Transverse colon (tissue), 4 donors: ENCODE measurements at regions of chr15 and their contacts with region 1.

Region 1: GRCh38 chr15:41811432-41812195 is 16.3 kb upstream of the JMJD7 start:
- DNase-seq: peak; percentile 86
- H3K4me3 ChIP-seq: no peak overlapping the region
- H3K27ac ChIP-seq: no peak overlapping the region
- H3K4me1 ChIP-seq: peaks cover 0 to 4% (median 1%) of the 10 kb centered on the region in 4 donors
- H3K27me3 ChIP-seq: no peaks in the 10 kb centered on the region
- CTCF ChIP-seq: peak; percentile 81 to 90 (median 87)
- EP300 ChIP-seq: no peak
- POLR2A ChIP-seq: no peak

Region 2: DNA sequence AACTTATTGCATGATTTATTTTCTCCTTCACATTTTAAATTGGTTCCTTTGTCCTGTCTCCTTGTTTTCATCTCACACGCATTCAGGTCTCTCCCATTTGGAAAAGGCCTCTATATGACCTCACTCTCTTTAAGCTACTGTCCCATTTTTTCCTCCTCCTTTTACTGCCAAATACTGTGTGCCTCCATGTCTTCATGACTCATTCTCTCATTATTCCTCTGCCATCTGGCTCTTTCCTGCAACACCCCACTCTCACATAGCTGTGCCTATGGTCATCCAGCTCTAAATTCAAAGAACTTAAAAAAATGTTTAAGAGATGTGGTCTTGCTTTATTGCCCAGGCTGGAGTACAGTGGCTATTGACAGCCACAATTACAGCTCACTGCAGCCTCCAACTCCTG is 204.6 kb before region 1 on chr15:
- in situ Hi-C with region 1: loop called in 2 of 4 experiments (anchors 25 kb)
- intact Hi-C with region 1: loop called (anchors 5 kb)
- DNase-seq: no peak
- H3K4me3 ChIP-seq: no peak overlapping the region
- H3K27ac ChIP-seq: no peak overlapping the region
- H3K4me1 ChIP-seq: peaks cover 0 to 8% (median 7%) of the 10 kb centered on the region in 4 donors
- H3K27me3 ChIP-seq: no peaks in the 10 kb centered on the region
- CTCF ChIP-seq: no peak
- EP300 ChIP-seq: no peak
- POLR2A ChIP-seq: no peak

Region 3: GRCh38 chr15:41621200-41622193 is 190.1 kb before region 1 on chr15:
- in situ Hi-C with region 1: loop called in 2 of 4 experiments (anchors 25 kb)
- intact Hi-C with region 1: no loop called
- DNase-seq: peak; percentile 78
- H3K4me3 ChIP-seq: peak overlapping the region; percentile 14 to 55 (median 44)
- H3K27ac ChIP-seq: peak overlapping the region; percentile 53 to 70 (median 63)
- H3K4me1 ChIP-seq: peaks cover 0 to 21% (median 15%) of the 10 kb centered on the region in 4 donors
- H3K27me3 ChIP-seq: no peaks in the 10 kb centered on the region
- CTCF ChIP-seq: no peak
- EP300 ChIP-seq: no peak
- POLR2A ChIP-seq: no peak

Region 4: DNA sequence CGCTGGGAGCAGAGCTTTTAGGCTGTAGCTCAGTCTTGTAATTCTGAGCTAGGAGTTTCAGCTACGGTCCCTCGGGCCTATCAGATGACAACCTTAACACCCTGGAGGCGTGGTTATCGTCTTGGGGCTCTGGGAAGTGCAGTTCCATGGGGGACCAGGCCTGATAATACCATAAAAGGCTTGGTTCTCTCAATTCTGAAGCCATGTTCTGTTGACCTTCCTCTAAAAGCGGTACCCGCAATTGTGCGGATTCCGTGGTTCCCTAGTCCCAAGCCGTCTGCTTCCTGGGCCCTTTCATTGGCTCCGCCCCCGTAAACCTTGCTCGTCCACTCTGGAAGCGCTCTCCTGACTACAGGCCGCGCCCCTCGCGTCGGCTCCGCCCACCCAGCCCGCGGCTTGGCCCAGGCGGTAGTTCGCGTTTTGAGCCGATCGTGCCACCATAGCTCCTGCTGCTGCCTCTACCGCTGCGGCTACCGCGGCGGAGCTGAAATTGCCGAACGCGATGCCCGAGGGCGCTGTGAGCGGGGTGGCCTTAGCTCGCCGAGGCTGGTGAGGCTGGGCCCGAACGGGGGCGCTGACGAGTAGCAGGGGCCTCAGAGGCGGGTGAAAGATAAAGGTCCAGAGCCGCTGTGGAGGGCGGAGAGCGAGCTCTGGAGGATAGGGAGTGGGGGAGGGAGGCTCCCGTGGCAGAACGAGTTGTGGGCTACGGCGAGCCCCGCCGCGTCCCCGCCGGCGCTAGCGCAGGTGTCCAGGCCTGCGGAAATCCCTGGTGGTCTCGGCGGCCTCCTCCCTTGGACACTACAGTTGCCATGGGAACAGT is 37.3 kb before region 1 on chr15 and contains the start of gene MAPKBP1:
- in situ Hi-C with region 1: no loop called
- intact Hi-C with region 1: loop called (anchors 2 kb)
- DNase-seq: peak; percentile 98
- H3K4me3 ChIP-seq: peak within 1 kb of the TSS; percentile 55 to 92 (median 69)
- H3K27ac ChIP-seq: peak within 1 kb of the TSS; percentile 88 to 93 (median 92)
- H3K4me1 ChIP-seq: peaks cover 21 to 38% (median 27%) of the 10 kb centered on the region in 4 donors
- H3K27me3 ChIP-seq: no peaks in the 10 kb centered on the region
- CTCF ChIP-seq: peak; percentile 51 to 80 (median 52)
- EP300 ChIP-seq: no peak
- POLR2A ChIP-seq: peak; percentile 51
- total RNA-seq, gene MAPKBP1: 16.0 to 36.4 (median 16.8) TPM

Region 5: DNA sequence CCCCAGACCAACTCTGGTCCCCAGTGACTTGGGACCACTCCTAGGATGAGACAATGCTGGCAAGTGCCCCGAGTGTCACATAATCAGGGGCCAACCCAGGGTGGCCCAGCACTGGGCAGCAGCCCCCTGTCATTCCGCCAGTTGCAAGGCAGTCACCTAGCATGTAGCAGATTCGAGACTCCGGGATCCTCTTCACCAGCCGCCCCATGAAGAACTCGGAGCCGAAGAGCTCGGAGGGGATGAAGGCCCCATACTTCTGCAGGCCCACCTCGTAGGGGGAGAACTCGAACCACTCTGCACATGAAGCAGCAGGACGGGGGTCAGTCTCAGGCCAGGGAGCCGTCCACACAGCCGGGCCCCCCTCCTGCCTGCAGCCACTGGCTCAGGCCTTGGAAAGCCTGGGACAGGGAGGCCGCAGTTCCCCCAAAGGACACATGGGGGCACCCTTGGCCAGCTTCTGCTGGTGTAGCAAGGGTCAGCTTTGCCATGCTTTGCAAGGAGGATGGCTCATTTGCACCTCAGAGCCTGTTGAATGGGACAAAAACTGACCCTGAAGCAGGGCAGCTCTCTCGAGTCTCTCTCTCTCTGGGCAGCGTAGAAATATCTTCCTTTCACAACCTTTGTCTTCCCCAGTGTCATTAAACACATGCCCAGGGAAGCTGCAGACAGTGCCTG is 177.8 kb after region 1 on chr15:
- in situ Hi-C with region 1: no loop called
- intact Hi-C with region 1: no loop called
- DNase-seq: peak; percentile 89
- H3K4me3 ChIP-seq: no peak overlapping the region
- H3K27ac ChIP-seq: no peak overlapping the region
- H3K4me1 ChIP-seq: no peaks in the 10 kb centered on the region
- H3K27me3 ChIP-seq: no peaks in the 10 kb centered on the region
- CTCF ChIP-seq: peak; percentile 96 to 99 (median 97)
- EP300 ChIP-seq: no peak
- POLR2A ChIP-seq: no peak